ENCODE measurements at regions of chr19 and their contacts with region 1.

Region 1: GRCh38 chr19:52637718-52638585 is at the start of gene ZNF83:
- DNase-seq: peak; percentile 96
- H3K4me3 Mint-ChIP-seq: peak within 1 kb of the TSS; percentile 89
- H3K27ac Mint-ChIP-seq: peak within 1 kb of the TSS; percentile 93
- H3K4me1 Mint-ChIP-seq: peaks cover 10% of the 10 kb centered on the region
- H3K27me3 Mint-ChIP-seq: no peaks in the 10 kb centered on the region
- total RNA-seq, gene ZNF83: 28.7 to 31.2 TPM

Region 2: DNA sequence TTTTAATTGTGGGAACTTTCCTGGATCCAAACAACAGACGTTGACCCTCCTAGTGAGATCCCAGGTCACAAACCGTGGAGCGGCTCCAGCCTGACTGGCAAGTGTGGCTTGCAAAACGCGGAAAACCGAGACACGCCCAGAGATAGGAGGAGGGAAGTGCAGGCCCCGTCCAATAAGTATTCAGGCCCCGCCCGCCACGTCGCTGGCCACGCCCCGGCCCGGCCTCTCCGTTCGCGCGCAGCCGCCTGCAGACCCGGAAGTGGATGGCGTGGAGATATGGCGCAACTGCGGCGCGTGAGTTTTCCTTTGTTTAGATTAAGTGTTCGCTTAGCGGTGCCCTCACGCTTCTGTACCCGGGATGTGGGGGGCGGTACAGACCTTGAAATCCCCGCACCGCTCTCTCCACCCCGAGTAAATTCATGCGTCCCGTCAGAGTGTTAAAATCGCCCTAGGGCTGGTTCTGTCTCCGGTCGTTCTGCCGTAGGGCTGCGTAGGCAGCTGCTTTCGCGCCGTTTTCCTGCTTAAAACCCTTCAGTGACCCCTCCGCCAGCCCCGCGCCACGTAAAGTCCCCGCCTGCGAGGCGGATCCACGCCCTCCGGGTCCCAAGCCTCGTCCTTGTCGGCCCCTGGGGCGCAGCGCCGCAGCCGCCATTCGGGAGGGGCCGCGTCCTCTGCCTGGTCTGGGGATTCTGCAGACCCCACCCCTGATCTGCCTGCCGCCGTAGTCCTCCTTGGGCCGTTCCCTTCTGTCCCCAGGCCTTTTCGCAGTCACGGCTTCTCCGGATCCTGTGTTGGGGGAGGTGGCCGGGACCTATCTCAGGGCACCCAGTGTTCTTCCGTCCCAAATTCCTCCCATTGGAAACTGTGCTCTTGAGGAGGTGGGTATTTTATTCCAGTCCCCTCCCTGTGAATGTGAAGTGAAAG is 368.4 kb before region 1 on chr19 and contains the start of gene ZNF766:
- CTCF ChIA-PET with region 1: no interaction called
- POLR2A ChIA-PET with region 1: no interaction called
- intact Hi-C with region 1: loop called (anchors 5 kb)
- DNase-seq: peak; percentile 98
- H3K4me3 Mint-ChIP-seq: peak within 1 kb of the TSS; percentile 96
- H3K27ac Mint-ChIP-seq: peak within 1 kb of the TSS; percentile 95
- H3K4me1 Mint-ChIP-seq: peaks cover 37% of the 10 kb centered on the region
- H3K27me3 Mint-ChIP-seq: no peaks in the 10 kb centered on the region
- total RNA-seq, gene ZNF766: 21.6 to 23.2 TPM

Region 3: GRCh38 chr19:52535771-52536447 is 102.0 kb before region 1 on chr19:
- CTCF ChIA-PET with region 1: no interaction called
- POLR2A ChIA-PET with region 1: no interaction called
- intact Hi-C with region 1: loop called (anchors 5 kb)
- DNase-seq: peak; percentile 96
- H3K4me3 Mint-ChIP-seq: peak overlapping the region; percentile 80
- H3K27ac Mint-ChIP-seq: peak overlapping the region; percentile 91
- H3K4me1 Mint-ChIP-seq: peaks cover 22% of the 10 kb centered on the region
- H3K27me3 Mint-ChIP-seq: no peaks in the 10 kb centered on the region

Region 4: DNA sequence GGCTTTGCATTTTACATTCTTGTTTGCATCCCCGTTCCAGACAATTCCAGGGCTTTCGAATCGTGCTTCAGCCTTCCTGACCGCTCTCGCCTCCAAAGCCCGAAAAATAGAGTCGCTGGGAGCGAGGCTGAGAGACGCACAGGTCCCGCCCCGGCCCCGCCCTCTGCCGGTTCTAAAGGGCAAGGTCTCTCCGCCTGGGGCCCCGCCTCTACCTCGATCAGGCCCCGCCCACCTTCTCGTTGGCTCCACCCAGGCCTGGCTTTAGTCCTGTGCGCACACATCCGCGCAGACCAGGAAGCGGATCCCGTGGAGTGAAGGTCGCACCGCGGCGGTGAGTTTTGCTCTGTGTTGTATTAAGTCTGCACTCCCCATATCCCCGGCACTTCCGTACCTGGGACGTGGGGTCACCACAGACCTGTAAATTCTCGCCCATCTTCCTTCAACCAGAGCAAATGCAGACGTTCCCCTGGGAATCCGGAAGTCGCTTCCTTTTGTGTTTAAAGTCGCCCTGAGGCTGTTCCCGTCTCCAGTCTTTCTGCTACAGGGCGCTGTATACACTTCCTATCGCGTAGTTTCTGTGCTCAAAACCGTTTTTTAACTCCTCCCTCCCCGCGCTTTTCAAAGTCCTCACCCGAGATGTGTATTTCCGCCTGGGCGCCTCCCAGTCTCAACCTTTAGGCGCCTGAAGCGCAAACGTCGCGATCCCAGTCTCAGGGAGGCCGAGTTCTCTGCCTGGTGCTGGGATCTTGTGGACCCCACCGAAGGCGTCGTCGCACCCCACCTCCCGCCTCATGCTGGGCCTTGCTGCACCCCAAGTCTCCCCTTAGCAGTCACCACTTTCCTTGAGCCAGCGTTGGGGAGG is 67.7 kb before region 1 on chr19 and contains the start of gene ZNF701:
- CTCF ChIA-PET with region 1: no interaction called
- POLR2A ChIA-PET with region 1: no interaction called
- intact Hi-C with region 1: loop called (anchors 1 kb)
- DNase-seq: peak; percentile 98
- H3K4me3 Mint-ChIP-seq: peak within 1 kb of the TSS; percentile 88
- H3K27ac Mint-ChIP-seq: peak within 1 kb of the TSS; percentile 92
- H3K4me1 Mint-ChIP-seq: peaks cover 31% of the 10 kb centered on the region
- H3K27me3 Mint-ChIP-seq: no peaks in the 10 kb centered on the region
- total RNA-seq, gene ZNF701: 19.9 to 22.7 TPM

Region 5: GRCh38 chr19:52601025-52601973 is 36.7 kb before region 1 on chr19:
- CTCF ChIA-PET with region 1: interaction called, 3 read pairs
- POLR2A ChIA-PET with region 1: no interaction called
- intact Hi-C with region 1: loop called (anchors 2 kb)
- DNase-seq: peak; percentile 96
- H3K4me3 Mint-ChIP-seq: peak overlapping the region; percentile 83
- H3K27ac Mint-ChIP-seq: peak overlapping the region; percentile 58
- H3K4me1 Mint-ChIP-seq: peaks cover 14% of the 10 kb centered on the region
- H3K27me3 Mint-ChIP-seq: no peaks in the 10 kb centered on the region

Region 6: DNA sequence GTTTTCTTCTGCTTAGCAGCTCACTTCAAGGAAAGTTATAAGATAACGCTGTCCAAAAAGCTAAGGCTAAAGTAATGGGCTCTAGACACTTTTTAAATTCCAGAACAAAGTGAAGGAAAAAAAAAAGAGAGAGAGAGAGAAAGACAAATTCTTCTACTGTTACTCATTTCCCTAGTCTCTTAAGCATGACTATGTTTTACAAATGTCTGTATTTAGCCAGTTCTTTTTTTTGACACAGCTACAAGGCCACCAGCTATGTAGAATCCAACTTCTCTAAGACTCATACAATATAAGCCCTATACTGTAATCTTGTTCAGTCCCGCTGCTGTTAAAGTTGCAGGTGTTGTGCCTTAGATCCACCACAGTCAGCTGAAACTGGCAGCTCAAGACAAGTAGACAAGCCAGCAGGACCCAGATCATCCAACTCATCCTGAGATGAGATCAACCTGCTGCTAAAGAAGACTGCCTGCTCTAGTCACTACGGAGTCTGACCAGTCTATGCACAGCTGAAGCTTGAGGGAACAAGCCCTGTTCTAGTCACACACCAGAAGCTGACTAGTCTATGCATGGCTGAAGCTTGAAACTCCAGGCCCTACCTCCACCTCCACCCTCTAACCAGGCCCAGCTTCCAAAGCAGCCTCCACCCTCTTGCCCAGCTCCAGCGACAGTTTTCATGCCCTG is 10.5 kb after region 1 on chr19:
- CTCF ChIA-PET with region 1: no interaction called
- POLR2A ChIA-PET with region 1: no interaction called
- intact Hi-C with region 1: no loop called
- DNase-seq: no peak
- H3K4me3 Mint-ChIP-seq: no peak overlapping the region
- H3K27ac Mint-ChIP-seq: no peak overlapping the region
- H3K4me1 Mint-ChIP-seq: no peaks in the 10 kb centered on the region
- H3K27me3 Mint-ChIP-seq: no peaks in the 10 kb centered on the region

Region 7: GRCh38 chr19:52690369-52691214 is 52.6 kb after region 1 on chr19:
- CTCF ChIA-PET with region 1: no interaction called
- POLR2A ChIA-PET with region 1: no interaction called
- intact Hi-C with region 1: loop called (anchors 2 kb)
- DNase-seq: peak; percentile 95
- H3K4me3 Mint-ChIP-seq: peak overlapping the region; percentile 96
- H3K27ac Mint-ChIP-seq: peak overlapping the region; percentile 88
- H3K4me1 Mint-ChIP-seq: peaks cover 24% of the 10 kb centered on the region
- H3K27me3 Mint-ChIP-seq: no peaks in the 10 kb centered on the region

Region 8: GRCh38 chr19:52734893-52735661 is 97.1 kb after region 1 on chr19 and contains the start of gene ZNF611:
- CTCF ChIA-PET with region 1: no interaction called
- POLR2A ChIA-PET with region 1: no interaction called
- intact Hi-C with region 1: loop called (anchors 5 kb)
- DNase-seq: peak; percentile 99
- H3K4me3 Mint-ChIP-seq: peak within 1 kb of the TSS; percentile 76
- H3K27ac Mint-ChIP-seq: peak within 1 kb of the TSS; percentile 89
- H3K4me1 Mint-ChIP-seq: peaks cover 26% of the 10 kb centered on the region
- H3K27me3 Mint-ChIP-seq: no peaks in the 10 kb centered on the region
- total RNA-seq, gene ZNF611: 17.9 to 20.3 TPM